Right cardiac atrium (tissue), 5 donors: ENCODE measurements at regions of chr4 and their contacts with region 1.

Region 1: DNA sequence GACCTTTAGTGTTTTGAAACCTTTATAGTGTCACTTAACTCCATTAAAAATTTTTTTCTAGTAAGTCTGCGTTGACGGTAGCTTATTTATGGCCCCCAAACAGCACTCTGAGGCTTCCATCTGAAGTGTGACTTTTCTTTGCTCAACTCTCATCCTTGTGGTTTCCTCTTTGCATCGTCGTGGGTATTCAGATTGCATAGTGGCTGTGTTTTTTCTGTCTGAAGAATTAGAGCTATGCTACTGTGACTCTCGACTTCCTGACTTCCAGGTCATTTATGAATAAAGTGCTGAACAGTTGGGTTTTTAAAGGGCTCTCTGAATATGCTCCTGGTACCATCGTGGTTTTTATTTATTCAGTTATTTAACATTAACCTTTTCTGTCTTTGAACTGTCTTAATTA is 44.9 kb downstream of the JADE1 start:
- DNase-seq: no peak
- ATAC-seq: no peak
- H3K4me3 ChIP-seq: no peak overlapping the region
- H3K27ac ChIP-seq: no peak overlapping the region
- H3K4me1 ChIP-seq: peaks cover 3% of the 10 kb centered on the region
- H3K27me3 ChIP-seq: no peaks in the 10 kb centered on the region

Region 2: GRCh38 chr4:128565565-128566186 is 288.8 kb before region 1 on chr4:
- intact Hi-C with region 1: loop called in 1 of 4 experiments (anchors 10 kb)
- DNase-seq: peak; percentile 31 to 76 (median 64)
- ATAC-seq: peak; percentile 69 to 85
- H3K4me3 ChIP-seq: no peak overlapping the region
- H3K27ac ChIP-seq: no peak overlapping the region
- H3K4me1 ChIP-seq: peaks cover 5% of the 10 kb centered on the region
- H3K27me3 ChIP-seq: no peaks in the 10 kb centered on the region